Thyroid gland (tissue), 4 donors: ENCODE measurements at regions of chr2 and their contacts with region 1.

Region 1: DNA sequence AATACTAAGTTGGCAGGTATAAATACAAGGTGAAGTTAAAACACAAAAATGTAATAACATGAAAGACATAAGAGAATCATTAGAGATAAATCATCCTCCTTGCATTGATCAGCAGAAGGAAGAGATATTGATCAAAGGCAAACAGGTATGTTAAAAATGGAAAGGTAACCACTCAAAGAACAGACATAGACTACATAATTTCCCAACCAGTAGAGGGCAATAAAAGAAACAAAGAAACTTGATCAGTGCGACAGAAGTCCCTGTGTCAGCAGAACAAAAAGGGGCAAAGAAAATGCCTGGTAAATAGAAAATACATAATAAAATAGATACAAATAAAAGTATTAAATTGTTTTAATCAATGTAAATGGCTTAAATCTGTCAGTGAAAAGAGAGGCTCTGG is 53.6 kb downstream of the FAM228A start:
- DNase-seq: no peak
- H3K4me3 ChIP-seq: no peak overlapping the region
- H3K27ac ChIP-seq: no peak overlapping the region
- H3K4me1 ChIP-seq: no peaks in the 10 kb centered on the region
- H3K27me3 ChIP-seq: no peaks in the 10 kb centered on the region
- CTCF ChIP-seq: peak in 4 of 6 experiments; percentile 18 to 64 (median 45)
- POLR2A ChIP-seq: no peak

Region 2: DNA sequence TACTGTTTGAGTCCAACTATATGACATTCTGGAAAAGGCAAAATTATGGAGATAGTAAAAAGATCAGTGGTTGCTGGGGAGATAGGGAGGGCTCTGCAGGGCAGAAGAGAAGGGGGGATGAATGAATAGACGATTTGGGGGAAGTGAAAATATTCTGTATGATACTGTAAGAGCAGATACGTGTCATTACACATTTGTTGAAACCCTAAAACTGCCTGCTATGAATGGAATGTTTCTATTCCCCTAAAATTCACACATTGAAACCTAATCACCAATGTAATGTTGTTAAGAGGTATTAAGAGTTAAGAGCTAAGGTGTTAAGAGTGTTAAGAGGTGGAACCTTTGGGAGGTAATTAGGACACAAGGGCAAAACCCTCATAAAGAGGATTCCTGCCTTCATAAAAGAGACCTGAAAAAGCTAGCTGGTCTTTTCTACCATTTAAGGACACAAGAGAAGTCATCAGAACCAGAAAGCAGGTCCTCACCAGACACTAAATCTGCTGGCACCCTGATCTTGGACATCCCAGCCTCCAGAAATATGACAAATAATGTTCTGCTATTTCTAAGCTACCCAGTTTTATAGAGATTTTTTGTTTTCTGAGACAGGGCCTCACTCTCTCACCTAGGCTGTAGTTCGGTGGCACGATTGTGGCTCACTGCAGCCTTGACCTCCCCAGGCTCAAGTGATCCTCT is 377.8 kb before region 1 on chr2:
- intact Hi-C with region 1: no loop called
- DNase-seq: no peak
- H3K4me3 ChIP-seq: no peak overlapping the region
- H3K27ac ChIP-seq: no peak overlapping the region
- H3K4me1 ChIP-seq: no peaks in the 10 kb centered on the region
- H3K27me3 ChIP-seq: no peaks in the 10 kb centered on the region
- CTCF ChIP-seq: no peak
- POLR2A ChIP-seq: no peak

Region 3: DNA sequence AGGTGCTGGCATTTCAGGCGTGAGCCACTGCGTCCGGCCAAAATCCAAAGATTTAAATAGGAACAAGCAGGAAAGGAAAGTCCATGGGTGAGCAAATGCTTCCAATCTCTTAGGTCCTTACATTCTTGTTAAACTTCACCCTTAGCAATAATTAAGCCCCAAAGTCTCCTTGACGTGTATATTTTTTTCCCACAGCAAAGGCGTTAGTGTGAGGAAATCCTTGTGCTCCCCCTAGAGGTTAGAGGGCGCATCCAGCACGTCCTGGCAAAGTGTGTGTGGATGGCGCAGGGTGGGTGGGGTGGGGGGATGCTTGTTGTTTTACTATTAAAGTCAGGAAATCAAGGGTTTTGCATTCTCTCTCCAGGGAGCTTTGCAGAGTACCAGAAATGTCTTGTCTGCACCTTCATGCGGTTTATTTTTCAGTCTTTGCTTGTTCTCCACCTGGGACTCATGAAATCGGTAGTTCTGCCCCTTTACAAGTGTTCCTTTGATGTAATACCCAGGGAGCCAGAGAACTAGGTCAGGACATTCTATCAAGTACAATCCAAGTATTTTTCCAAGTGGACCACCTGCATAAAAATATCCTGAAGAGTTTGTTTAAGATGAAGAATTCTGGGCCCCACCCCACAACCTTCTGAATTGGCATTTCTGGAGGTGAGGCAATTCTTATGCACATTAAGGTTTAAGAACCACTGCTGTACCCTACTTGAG is 154.0 kb after region 1 on chr2:
- intact Hi-C with region 1: loop called (anchors 5 kb)
- DNase-seq: peak; percentile 62 to 64
- H3K4me3 ChIP-seq: no peak overlapping the region
- H3K27ac ChIP-seq: no peak overlapping the region
- H3K4me1 ChIP-seq: peaks cover 8 to 18% of the 10 kb centered on the region in 2 donors
- H3K27me3 ChIP-seq: no peaks in the 10 kb centered on the region
- CTCF ChIP-seq: peak; percentile 46 to 89 (median 55)
- POLR2A ChIP-seq: no peak

Region 4: DNA sequence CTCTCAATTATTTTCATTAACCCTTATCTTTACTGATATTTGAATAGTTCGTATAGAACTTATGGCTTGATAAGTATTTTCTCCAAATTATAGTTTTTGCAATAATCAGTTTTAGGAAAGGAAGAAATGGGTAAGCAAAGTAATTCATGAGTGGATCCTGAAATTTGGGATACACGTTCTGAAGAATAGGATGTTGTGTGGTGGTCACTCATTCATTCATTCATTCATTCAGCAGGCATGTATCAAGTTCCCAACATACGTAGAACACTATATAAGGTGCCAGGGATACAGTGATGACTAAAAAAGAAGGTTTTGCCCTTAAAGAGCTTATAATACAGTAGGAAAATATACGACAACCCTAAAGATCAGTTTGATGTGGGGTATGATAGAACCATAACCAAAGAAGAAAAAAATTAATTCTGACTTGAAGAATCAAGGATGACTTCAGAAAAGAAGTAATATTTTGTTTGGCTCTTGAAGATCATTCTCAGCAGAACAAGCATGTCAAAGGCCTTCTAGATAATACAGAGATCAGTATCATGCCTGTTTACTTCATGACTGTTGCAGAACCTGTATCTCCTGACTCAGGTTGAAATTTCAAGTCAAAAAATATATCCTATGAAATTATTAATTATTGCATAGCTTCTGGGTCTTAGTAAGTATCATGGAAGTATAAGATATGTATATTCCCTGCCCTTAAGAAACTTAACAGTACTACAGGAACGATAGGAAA is 469.5 kb after region 1 on chr2:
- intact Hi-C with region 1: no loop called
- DNase-seq: no peak
- H3K4me3 ChIP-seq: no peak overlapping the region
- H3K27ac ChIP-seq: no peak overlapping the region
- H3K4me1 ChIP-seq: peaks cover 0 to 9% of the 10 kb centered on the region in 2 donors
- H3K27me3 ChIP-seq: no peaks in the 10 kb centered on the region
- CTCF ChIP-seq: no peak
- POLR2A ChIP-seq: no peak

Region 5: GRCh38 chr2:25324905-25325592 is 1096.6 kb after region 1 on chr2:
- intact Hi-C with region 1: no loop called
- DNase-seq: peak; percentile 41 to 45
- H3K4me3 ChIP-seq: no peak overlapping the region
- H3K27ac ChIP-seq: no peak overlapping the region
- H3K4me1 ChIP-seq: peaks cover 7 to 24% of the 10 kb centered on the region in 2 donors
- H3K27me3 ChIP-seq: no peaks in the 10 kb centered on the region
- CTCF ChIP-seq: no peak
- POLR2A ChIP-seq: no peak